Left lung (tissue), 14 donors: ENCODE measurements at regions of chr21 and their contacts with region 1.

Region 1: DNA sequence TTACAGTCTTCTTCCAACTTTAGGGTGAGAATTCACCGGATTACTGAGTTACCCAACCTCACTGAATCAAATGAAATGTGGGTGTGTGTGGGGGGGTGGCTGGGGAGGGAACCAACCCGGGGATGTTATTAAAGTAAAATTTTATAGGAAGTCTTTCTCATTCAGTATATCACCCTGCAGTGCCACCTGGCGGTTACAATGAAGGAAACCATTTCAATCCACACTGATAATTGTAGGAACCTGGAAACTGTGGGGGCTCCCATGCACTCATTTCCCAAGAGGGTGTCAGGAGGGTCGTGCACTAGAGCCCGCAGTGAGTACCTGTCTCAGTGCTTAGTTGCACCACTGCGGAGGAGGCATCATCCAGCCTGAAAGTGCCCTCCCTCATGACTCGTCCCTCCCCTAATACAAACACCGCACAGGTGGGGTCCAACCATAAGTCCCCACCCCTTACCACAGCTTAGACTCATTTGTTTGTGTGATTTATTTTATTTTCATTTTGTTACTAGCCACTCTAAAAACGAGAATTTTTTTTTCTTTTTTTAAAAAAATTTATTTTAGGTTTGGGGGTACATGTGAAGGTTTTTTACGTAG is 29.1 kb upstream of the IGSF5 start:
- DNase-seq: peak in 2 of 4 donors; percentile 29 to 53
- ATAC-seq: peak; percentile 75
- H3K4me3 ChIP-seq: no peak overlapping the region
- H3K27ac ChIP-seq: no peak overlapping the region
- H3K4me1 ChIP-seq: no peaks in the 10 kb centered on the region
- H3K27me3 ChIP-seq: no peaks in the 10 kb centered on the region
- CTCF ChIP-seq: peak; percentile 57 to 58

Region 2: GRCh38 chr21:39518138-39518846 is 197.6 kb before region 1 on chr21:
- intact Hi-C with region 1: loop called (anchors 5 to 10 kb)
- DNase-seq: peak in 2 of 4 donors; percentile 47 to 67
- ATAC-seq: peak; percentile 95
- H3K4me3 ChIP-seq: no peak overlapping the region
- H3K27ac ChIP-seq: no peak overlapping the region
- H3K4me1 ChIP-seq: no peaks in the 10 kb centered on the region
- H3K27me3 ChIP-seq: no peaks in the 10 kb centered on the region
- CTCF ChIP-seq: peak; percentile 88 to 93

Region 3: DNA sequence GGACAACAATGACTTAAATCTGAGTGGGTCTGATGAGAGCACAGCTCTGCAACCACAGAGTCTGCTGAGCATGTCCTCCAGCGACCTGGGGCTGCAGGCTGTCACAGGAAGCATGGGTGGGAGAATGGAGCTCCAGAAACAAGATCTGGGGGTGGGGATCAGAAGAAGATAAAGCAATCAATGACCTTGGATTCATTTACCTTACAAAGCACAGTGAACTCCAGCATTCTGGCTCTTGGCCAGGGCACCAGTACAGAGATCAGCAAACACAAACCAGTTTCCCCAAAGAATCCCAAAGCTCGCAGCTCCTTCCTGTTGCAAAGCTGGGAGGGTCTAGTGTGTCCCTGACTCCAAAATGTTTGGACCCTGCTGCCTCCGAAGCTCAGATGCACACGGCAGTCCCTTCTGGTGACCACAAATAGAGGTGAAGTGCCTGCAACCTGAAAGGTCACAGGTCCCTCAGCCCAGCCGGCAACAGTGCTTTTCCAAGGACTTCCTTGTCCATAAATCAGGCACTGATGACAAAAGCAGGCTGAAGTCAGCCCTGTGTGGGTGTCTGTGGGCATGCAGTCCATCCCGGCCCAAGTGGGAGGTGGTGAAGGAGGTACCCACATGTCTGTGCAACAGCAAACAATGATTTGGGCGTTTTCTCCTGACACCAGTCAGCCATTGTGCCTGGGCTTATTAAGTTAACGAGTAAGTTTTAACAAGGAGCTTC is 188.1 kb before region 1 on chr21:
- intact Hi-C with region 1: loop called in 1 of 2 experiments (anchors 10 kb)
- DNase-seq: peak in 1 of 4 donors; percentile 28
- ATAC-seq: no peak
- H3K4me3 ChIP-seq: no peak overlapping the region
- H3K27ac ChIP-seq: no peak overlapping the region
- H3K4me1 ChIP-seq: peaks cover 0 to 10% of the 10 kb centered on the region in 2 donors
- H3K27me3 ChIP-seq: no peaks in the 10 kb centered on the region
- CTCF ChIP-seq: no peak